ENCODE measurements at regions of chr16 and their contacts with region 1.

Region 1: GRCh38 chr16:53945996-53946395 is 242.0 kb downstream of the FTO start:
- DNase-seq: peak; percentile 43
- H3K4me3 ChIP-seq: no peak overlapping the region
- H3K27ac ChIP-seq: no peak overlapping the region
- H3K4me1 ChIP-seq: peaks cover 3% of the 10 kb centered on the region
- H3K27me3 ChIP-seq: no peaks in the 10 kb centered on the region
- CTCF ChIP-seq: peak; percentile 83 to 94

Region 2: DNA sequence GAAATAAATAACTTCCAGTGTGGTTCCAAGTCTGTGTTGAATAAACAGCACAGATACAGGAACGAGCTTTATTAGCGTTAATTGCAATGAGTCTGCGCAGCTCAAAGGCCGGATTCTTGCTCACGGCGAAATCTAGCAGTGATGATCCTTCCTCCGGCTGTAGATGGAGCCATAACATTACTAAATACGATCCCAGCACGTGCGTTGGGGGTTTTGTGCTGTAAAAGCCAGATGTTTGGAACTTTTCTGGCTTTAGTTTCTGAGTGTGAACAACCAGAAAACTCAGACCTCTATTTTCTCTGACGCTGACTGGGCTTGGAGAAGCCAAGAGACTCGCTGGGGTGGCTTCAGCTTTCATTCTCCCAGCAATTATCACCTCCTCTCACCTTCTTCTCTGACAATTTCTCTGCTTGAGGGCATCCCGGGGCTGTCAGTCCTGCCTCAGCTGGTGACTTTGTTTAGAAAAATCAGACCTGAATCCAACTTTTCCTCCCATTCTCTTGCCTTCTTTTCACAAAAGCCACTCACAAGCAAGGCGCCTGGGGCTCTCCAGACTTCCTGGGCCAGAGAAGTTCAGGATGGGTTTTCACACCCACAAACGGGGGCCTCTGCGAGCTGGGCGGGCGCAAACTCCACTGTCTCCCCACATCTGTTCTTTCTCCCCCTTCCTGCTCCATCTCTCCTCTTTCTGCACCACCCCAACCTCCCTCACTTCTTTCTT is 395.9 kb before region 1 on chr16:
- CTCF ChIA-PET with region 1: no interaction called
- dilution Hi-C with region 1: no loop called
- in situ Hi-C with region 1: no loop called
- intact Hi-C with region 1: loop called (anchors 2 kb)
- DNase-seq: peak; percentile 60
- H3K4me3 ChIP-seq: no peak overlapping the region
- H3K27ac ChIP-seq: no peak overlapping the region
- H3K4me1 ChIP-seq: no peaks in the 10 kb centered on the region
- H3K27me3 ChIP-seq: no peaks in the 10 kb centered on the region
- CTCF ChIP-seq: peak; percentile 72 to 76

Region 3: GRCh38 chr16:53743149-53743566 is 202.8 kb before region 1 on chr16:
- CTCF ChIA-PET with region 1: no interaction called
- dilution Hi-C with region 1: no loop called
- in situ Hi-C with region 1: no loop called
- intact Hi-C with region 1: no loop called
- DNase-seq: peak; percentile 27
- H3K4me3 ChIP-seq: no peak overlapping the region
- H3K27ac ChIP-seq: no peak overlapping the region
- H3K4me1 ChIP-seq: peaks cover 46% of the 10 kb centered on the region
- H3K27me3 ChIP-seq: no peaks in the 10 kb centered on the region
- CTCF ChIP-seq: peak; percentile 65 to 70

Region 4: GRCh38 chr16:53905028-53905427 is 41.0 kb before region 1 on chr16:
- CTCF ChIA-PET with region 1: no interaction called
- dilution Hi-C with region 1: loop called (anchors 5 kb)
- in situ Hi-C with region 1: no loop called
- intact Hi-C with region 1: no loop called
- DNase-seq: no peak
- H3K4me3 ChIP-seq: no peak overlapping the region
- H3K27ac ChIP-seq: no peak overlapping the region
- H3K4me1 ChIP-seq: no peaks in the 10 kb centered on the region
- H3K27me3 ChIP-seq: no peaks in the 10 kb centered on the region
- CTCF ChIP-seq: no peak

Region 5: DNA sequence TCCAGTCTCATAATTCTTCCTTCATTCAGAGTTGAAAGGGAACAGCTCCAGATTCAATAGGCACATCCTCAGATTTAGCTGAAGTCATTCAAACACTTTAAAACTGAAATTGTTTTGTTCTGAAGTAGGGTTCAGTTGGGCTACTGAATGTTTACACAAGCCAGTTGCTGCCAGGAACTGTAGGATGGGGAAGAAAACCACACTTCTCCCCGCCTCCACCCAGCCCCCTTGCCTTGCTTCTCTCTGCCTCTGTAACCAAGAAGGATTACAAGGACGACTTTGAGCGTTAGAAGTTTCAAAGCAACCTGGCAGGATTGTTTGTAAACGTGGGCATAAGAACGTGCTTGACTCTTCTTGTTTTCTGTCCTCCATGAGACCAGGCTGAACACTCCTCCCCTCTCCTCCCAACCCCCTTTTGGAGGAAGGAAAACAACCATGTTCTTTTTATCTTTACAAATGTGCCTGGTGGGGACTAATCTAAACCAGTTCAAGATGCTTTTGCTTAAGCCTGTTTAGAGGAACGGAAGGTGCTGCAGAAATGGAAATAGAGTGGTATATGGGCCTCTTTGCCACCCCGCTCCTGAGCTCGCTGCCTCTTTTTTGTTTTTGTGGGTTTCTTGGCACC is 45.9 kb after region 1 on chr16:
- CTCF ChIA-PET with region 1: no interaction called
- dilution Hi-C with region 1: no loop called
- in situ Hi-C with region 1: no loop called
- intact Hi-C with region 1: no loop called
- DNase-seq: no peak
- H3K4me3 ChIP-seq: no peak overlapping the region
- H3K27ac ChIP-seq: no peak overlapping the region
- H3K4me1 ChIP-seq: no peaks in the 10 kb centered on the region
- H3K27me3 ChIP-seq: no peaks in the 10 kb centered on the region
- CTCF ChIP-seq: no peak

Region 6: GRCh38 chr16:54050166-54050857 is 104.3 kb after region 1 on chr16:
- CTCF ChIA-PET with region 1: no interaction called
- dilution Hi-C with region 1: no loop called
- in situ Hi-C with region 1: no loop called
- intact Hi-C with region 1: no loop called
- DNase-seq: no peak
- H3K4me3 ChIP-seq: no peak overlapping the region
- H3K27ac ChIP-seq: no peak overlapping the region
- H3K4me1 ChIP-seq: peaks cover 5% of the 10 kb centered on the region
- H3K27me3 ChIP-seq: no peaks in the 10 kb centered on the region
- CTCF ChIP-seq: no peak

Region 7: DNA sequence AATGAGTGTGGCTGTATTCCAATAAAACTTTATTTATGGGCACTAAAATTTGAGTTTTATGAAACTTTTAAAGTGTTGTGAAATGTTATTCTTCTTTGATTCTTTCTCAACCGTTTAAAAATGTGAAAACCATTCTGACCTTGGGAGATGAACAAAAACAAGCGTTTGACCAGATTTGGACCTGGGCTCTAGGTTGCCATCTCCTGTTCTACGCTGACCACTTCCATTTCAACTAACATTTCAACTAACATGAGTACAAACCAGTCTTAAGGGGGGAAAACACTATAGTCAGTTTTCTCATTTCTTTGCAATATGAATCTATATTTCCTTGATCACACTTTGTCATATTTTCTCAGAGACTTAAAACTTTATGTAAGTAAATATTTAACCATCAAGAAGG is 866.2 kb after region 1 on chr16:
- CTCF ChIA-PET with region 1: no interaction called
- dilution Hi-C with region 1: no loop called
- in situ Hi-C with region 1: no loop called
- intact Hi-C with region 1: loop called (anchors 1 kb)
- DNase-seq: no peak
- H3K4me3 ChIP-seq: no peak overlapping the region
- H3K27ac ChIP-seq: no peak overlapping the region
- H3K4me1 ChIP-seq: no peaks in the 10 kb centered on the region
- H3K27me3 ChIP-seq: no peaks in the 10 kb centered on the region
- CTCF ChIP-seq: peak in 1 of 2 donors; percentile 53

Region 8: GRCh38 chr16:54957403-54958171 is 1011.6 kb after region 1 on chr16:
- CTCF ChIA-PET with region 1: no interaction called
- dilution Hi-C with region 1: no loop called
- in situ Hi-C with region 1: no loop called
- intact Hi-C with region 1: loop called (anchors 1 kb)
- DNase-seq: peak; percentile 43
- H3K4me3 ChIP-seq: no peak overlapping the region
- H3K27ac ChIP-seq: no peak overlapping the region
- H3K4me1 ChIP-seq: no peaks in the 10 kb centered on the region
- H3K27me3 ChIP-seq: no peaks in the 10 kb centered on the region
- CTCF ChIP-seq: peak; percentile 68 to 82